ENCODE measurements at regions of chr1 and their contacts with region 1.

Region 1: GRCh38 chr1:14923727-14924452 is 229.7 kb upstream of the TMEM51 start:
- DNase-seq: peak in 9 of 10 donors; percentile 34 to 81 (median 69)
- H3K4me3 ChIP-seq: peak overlapping the region in 56 of 59 donors; percentile 13 to 89 (median 64)
- H3K27ac ChIP-seq: peak overlapping the region in 56 of 59 donors; percentile 47 to 90 (median 83)
- H3K27me3 ChIP-seq: no peaks in the 10 kb centered on the region
- CTCF ChIP-seq: peak in 1 of 56 donors; percentile 8

Region 2: GRCh38 chr1:14259191-14259757 is 664.6 kb before region 1 on chr1:
- intact Hi-C with region 1: loop called (anchors 5 kb)
- DNase-seq: peak; percentile 69 to 97 (median 92)
- H3K4me3 ChIP-seq: peak overlapping the region in 9 of 59 donors; percentile 0 to 27 (median 10)
- H3K27ac ChIP-seq: peak overlapping the region; percentile 61 to 100 (median 96)
- H3K27me3 ChIP-seq: no peaks in the 10 kb centered on the region
- CTCF ChIP-seq: peak in 7 of 56 donors; percentile 3 to 35 (median 18)

Region 3: GRCh38 chr1:14598497-14599172 is 325.3 kb before region 1 on chr1 and contains the start of gene KAZN:
- intact Hi-C with region 1: loop called in 1 of 2 experiments (anchors 10 kb)
- DNase-seq: peak in 8 of 10 donors; percentile 31 to 76 (median 57)
- H3K4me3 ChIP-seq: peak within 1 kb of the TSS; percentile 52 to 85 (median 74)
- H3K27ac ChIP-seq: peak within 1 kb of the TSS in 45 of 59 donors; percentile 6 to 88 (median 61)
- H3K27me3 ChIP-seq: peaks cover 0 to 8% (median 0%) of the 10 kb centered on the region in 45 donors
- CTCF ChIP-seq: peak in 1 of 56 donors; percentile 13
- total RNA-seq, gene KAZN: 51.1 to 93.6 (median 76.3) TPM

Region 4: GRCh38 chr1:14626869-14627607 is 296.9 kb before region 1 on chr1:
- intact Hi-C with region 1: loop called in 1 of 2 experiments (anchors 10 kb)
- DNase-seq: peak in 3 of 10 donors; percentile 28 to 49 (median 35)
- H3K4me3 ChIP-seq: peak overlapping the region in 5 of 59 donors; percentile 15 to 55 (median 36)
- H3K27ac ChIP-seq: peak overlapping the region; percentile 33 to 95 (median 87)
- H3K27me3 ChIP-seq: no peaks in the 10 kb centered on the region
- CTCF ChIP-seq: peak in 1 of 56 donors; percentile 8

Region 5: DNA sequence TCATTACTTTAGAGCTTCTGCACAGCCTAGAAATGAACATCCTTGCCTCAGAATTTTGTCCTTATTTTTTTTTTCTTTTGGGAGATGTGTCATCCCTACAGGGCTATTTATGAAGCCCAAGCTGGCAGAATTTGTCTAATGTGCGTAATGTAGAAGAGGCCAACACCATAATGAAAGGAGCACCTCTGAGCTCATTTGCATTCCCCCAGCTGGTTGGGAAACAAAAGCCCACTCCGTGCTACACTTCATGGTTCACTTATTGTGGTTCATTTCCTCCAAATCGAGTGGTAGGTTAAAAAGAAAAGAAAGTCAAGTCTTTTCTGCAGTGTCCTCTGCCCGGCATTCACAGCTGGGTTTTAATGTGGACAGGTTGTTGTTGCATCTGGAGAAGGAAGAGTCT is 251.9 kb before region 1 on chr1:
- intact Hi-C with region 1: no loop called
- DNase-seq: no peak
- H3K4me3 ChIP-seq: no peak overlapping the region
- H3K27ac ChIP-seq: peak overlapping the region in 1 of 59 donors; percentile 21
- H3K27me3 ChIP-seq: no peaks in the 10 kb centered on the region
- CTCF ChIP-seq: no peak

Region 6: GRCh38 chr1:14945132-14946016 is 21.5 kb after region 1 on chr1:
- intact Hi-C with region 1: no loop called
- DNase-seq: peak in 8 of 10 donors; percentile 43 to 72 (median 67)
- H3K4me3 ChIP-seq: peak overlapping the region in 36 of 59 donors; percentile 0 to 46 (median 17)
- H3K27ac ChIP-seq: peak overlapping the region; percentile 83 to 98 (median 95)
- H3K27me3 ChIP-seq: no peaks in the 10 kb centered on the region
- CTCF ChIP-seq: peak in 1 of 56 donors; percentile 4

Region 7: DNA sequence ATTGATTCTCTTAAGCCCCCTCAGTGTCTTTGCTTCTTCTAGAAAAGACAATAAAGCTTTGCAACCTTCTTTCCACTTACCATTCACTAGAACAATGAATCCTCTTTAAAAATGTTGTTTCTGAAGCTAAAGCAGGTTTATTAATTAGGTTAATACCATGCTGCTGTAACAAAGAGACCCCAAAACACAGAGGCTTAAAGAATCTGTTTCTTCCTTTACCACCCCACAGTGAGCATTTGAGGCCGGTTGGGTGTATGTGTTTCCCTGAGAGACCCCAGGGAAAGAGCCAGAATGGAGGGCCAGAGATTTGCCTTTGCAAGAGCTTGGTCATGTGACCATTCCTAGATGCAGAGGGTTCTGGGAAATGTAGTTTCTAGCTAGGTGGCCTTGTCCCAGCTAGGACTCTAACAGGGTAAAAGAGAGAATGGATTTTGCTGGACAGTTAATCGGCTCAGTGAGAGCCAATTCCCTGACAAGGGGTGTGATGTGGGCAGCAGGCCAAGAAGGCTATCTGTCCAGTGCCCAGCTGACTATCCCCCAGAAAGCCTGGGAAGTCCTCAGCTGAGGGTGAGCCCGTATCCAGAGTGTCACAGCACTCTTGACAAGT is 37.9 kb after region 1 on chr1:
- intact Hi-C with region 1: no loop called
- DNase-seq: no peak
- H3K4me3 ChIP-seq: no peak overlapping the region
- H3K27ac ChIP-seq: peak overlapping the region in 13 of 59 donors; percentile 1 to 68 (median 24)
- H3K27me3 ChIP-seq: no peaks in the 10 kb centered on the region
- CTCF ChIP-seq: no peak

Region 8: DNA sequence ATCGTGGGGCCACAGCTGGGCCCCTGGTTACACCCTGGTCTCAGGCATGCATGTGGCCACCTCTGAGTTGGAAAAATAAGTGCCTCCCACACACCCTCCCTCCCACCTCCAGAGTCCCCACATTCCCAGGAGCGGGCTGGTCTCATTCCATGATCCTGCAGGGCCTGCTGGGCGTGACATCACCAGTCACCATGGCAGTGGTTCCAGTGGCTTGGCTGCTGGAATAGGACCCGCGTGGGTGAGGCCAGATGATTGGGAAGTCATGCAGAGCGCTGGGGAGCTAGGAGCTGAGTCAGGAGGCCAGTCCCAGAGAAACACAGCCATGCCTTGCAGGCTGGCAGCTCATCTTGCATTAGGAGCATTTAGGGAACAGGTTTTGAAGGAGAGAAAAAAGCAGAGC is 104.2 kb after region 1 on chr1:
- intact Hi-C with region 1: loop called (anchors 1 to 2 kb)
- DNase-seq: peak in 9 of 10 donors; percentile 36 to 89 (median 69)
- H3K4me3 ChIP-seq: peak overlapping the region in 1 of 59 donors; percentile 8
- H3K27ac ChIP-seq: peak overlapping the region; percentile 0 to 89 (median 75)
- H3K27me3 ChIP-seq: no peaks in the 10 kb centered on the region
- CTCF ChIP-seq: no peak

Measured in dorsolateral prefrontal cortex (tissue), 120 donors.